ENCODE measurements at regions of chr3 and their contacts with region 1.

Region 1: GRCh38 chr3:42961633-42962032 is 17.5 kb upstream of the GASK1A start:
- DNase-seq: no peak
- ATAC-seq: peak; percentile 54
- H3K4me3 ChIP-seq: no peak overlapping the region
- H3K27ac ChIP-seq: no peak overlapping the region
- H3K4me1 ChIP-seq: no peaks in the 10 kb centered on the region
- H3K27me3 ChIP-seq: no peaks in the 10 kb centered on the region
- CTCF ChIP-seq: peak; percentile 42 to 54 (median 45); a peak in 4 of 6 replicates
- EP300 ChIP-seq: no peak
- POLR2A ChIP-seq: no peak
- RAD21 ChIP-seq: peak; percentile 49; the same call in 1 of the 2 replicates

Region 2: GRCh38 chr3:42942693-42943092 is 18.9 kb before region 1 on chr3:
- CTCF ChIA-PET with region 1: interaction called, 11 read pairs
- POLR2A ChIA-PET with region 1: no interaction called
- RAD21 ChIA-PET with region 1: no interaction called
- SMC1A ChIA-PET with region 1: no interaction called
- in situ Hi-C with region 1: no loop called
- intact Hi-C with region 1: no loop called
- DNase-seq: no peak
- ATAC-seq: no peak
- H3K4me3 ChIP-seq: no peak overlapping the region
- H3K27ac ChIP-seq: no peak overlapping the region
- H3K4me1 ChIP-seq: no peaks in the 10 kb centered on the region
- H3K27me3 ChIP-seq: peaks cover 2% of the 10 kb centered on the region in 2 experiments; a peak in 2 of 4 replicates
- CTCF ChIP-seq: no peak
- EP300 ChIP-seq: no peak
- POLR2A ChIP-seq: no peak
- RAD21 ChIP-seq: no peak

Region 3: DNA sequence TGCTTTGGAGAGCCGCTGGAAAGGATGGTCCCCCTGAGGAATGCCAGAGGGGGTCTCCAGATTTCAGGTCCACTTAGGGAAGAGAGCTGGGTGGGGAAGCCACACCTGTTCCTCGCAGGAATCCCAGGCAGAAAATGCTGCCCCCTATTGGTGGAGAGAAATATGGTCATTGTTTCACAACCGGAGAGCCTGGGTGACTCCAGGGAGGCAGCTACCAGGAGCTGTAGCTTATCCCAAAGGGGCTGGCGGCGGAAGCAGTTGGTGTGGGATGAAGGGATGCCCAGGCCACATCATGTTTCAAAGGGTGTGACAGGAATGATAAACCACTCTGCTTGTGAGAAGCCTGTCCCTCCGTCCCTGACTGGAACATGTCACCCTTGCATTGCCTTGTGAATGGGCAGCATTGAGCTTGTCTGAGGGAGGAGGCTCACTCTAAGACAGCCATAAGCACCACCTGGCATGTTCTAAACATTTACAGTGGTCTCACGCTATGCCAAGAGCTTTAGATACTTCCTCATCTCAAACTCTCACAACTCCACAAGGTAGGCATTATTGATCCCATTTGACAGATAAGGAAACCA is 109.8 kb after region 1 on chr3:
- CTCF ChIA-PET with region 1: interaction called, 87 read pairs
- POLR2A ChIA-PET with region 1: no interaction called
- RAD21 ChIA-PET with region 1: interaction called, 50 read pairs
- SMC1A ChIA-PET with region 1: interaction called, 42 read pairs
- in situ Hi-C with region 1: no loop called
- intact Hi-C with region 1: no loop called
- DNase-seq: no peak
- ATAC-seq: no peak
- H3K4me3 ChIP-seq: no peak overlapping the region
- H3K27ac ChIP-seq: no peak overlapping the region
- H3K4me1 ChIP-seq: no peaks in the 10 kb centered on the region
- H3K27me3 ChIP-seq: no peaks in the 10 kb centered on the region; a peak in 1 of 4 replicates
- CTCF ChIP-seq: peak; percentile 30 to 44 (median 39); a peak in 5 of 6 replicates
- EP300 ChIP-seq: no peak
- POLR2A ChIP-seq: no peak
- RAD21 ChIP-seq: peak; percentile 38

Region 4: GRCh38 chr3:43087249-43087776 is 125.7 kb after region 1 on chr3:
- CTCF ChIA-PET with region 1: interaction called, 40 read pairs
- POLR2A ChIA-PET with region 1: no interaction called
- RAD21 ChIA-PET with region 1: interaction called, 37 read pairs
- SMC1A ChIA-PET with region 1: interaction called, 40 read pairs
- in situ Hi-C with region 1: no loop called
- intact Hi-C with region 1: no loop called
- DNase-seq: no peak
- ATAC-seq: peak; percentile 47; the same call in 1 of the 3 replicates
- H3K4me3 ChIP-seq: no peak overlapping the region
- H3K27ac ChIP-seq: no peak overlapping the region
- H3K4me1 ChIP-seq: no peaks in the 10 kb centered on the region
- H3K27me3 ChIP-seq: no peaks in the 10 kb centered on the region
- CTCF ChIP-seq: peak in 2 of 3 experiments; percentile 12 to 20; a peak in 1 of 6 replicates
- EP300 ChIP-seq: no peak
- POLR2A ChIP-seq: no peak
- RAD21 ChIP-seq: peak; percentile 18; the same call in 1 of the 2 replicates

Region 5: DNA sequence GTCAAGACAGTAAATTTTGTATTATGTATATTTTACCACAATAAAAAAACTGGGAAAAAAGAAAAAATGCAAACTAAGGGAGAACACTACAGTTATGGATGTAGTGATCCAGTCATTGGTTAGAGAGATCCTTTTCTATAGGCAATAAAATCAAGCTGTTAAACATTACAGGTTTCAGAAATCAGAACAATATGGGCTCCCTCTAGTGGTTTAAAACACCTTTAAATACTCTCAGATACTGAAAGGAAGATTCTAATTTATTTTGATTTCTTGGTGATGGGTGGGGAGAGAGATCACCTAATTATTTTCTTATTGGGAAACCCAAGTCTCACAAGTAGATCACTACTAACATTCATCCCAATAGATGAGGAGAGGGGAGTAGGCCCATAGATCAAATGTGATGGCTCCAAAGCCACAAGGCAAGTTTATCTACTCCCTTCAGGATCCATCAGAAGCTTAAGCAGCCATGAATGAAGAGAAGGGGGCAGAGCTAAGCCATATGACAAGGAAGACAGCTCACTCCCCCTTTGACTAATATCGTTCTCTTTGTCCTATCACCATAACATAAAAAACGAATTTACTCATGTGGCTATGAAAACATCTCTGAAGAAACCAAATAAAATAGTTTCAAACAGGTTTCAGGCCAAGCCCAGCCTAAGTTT is 541.6 kb after region 1 on chr3:
- CTCF ChIA-PET with region 1: interaction called, 21 read pairs
- POLR2A ChIA-PET with region 1: no interaction called
- RAD21 ChIA-PET with region 1: interaction called, 10 read pairs
- SMC1A ChIA-PET with region 1: interaction called, 4 read pairs
- in situ Hi-C with region 1: loop called (anchors 10 kb)
- intact Hi-C with region 1: loop called (anchors 1 kb)
- DNase-seq: no peak
- ATAC-seq: peak; percentile 77
- H3K4me3 ChIP-seq: no peak overlapping the region
- H3K27ac ChIP-seq: no peak overlapping the region
- H3K4me1 ChIP-seq: no peaks in the 10 kb centered on the region
- H3K27me3 ChIP-seq: no peaks in the 10 kb centered on the region
- CTCF ChIP-seq: peak; percentile 26 to 40 (median 33); a peak in 5 of 6 replicates
- EP300 ChIP-seq: no peak
- POLR2A ChIP-seq: no peak
- RAD21 ChIP-seq: peak; percentile 45

Measured in GM12878 (cell line).